Cardiac septum (tissue), 1 donor: ENCODE measurements at regions of chr3 and their contacts with region 1.

Region 1: GRCh38 chr3:196684548-196685407 is 27.3 kb downstream of the CEP19 start:
- DNase-seq: no peak

Region 2: GRCh38 chr3:196251918-196252317 is 432.9 kb before region 1 on chr3:
- intact Hi-C with region 1: loop called (anchors 10 kb)
- DNase-seq: no peak

Region 3: DNA sequence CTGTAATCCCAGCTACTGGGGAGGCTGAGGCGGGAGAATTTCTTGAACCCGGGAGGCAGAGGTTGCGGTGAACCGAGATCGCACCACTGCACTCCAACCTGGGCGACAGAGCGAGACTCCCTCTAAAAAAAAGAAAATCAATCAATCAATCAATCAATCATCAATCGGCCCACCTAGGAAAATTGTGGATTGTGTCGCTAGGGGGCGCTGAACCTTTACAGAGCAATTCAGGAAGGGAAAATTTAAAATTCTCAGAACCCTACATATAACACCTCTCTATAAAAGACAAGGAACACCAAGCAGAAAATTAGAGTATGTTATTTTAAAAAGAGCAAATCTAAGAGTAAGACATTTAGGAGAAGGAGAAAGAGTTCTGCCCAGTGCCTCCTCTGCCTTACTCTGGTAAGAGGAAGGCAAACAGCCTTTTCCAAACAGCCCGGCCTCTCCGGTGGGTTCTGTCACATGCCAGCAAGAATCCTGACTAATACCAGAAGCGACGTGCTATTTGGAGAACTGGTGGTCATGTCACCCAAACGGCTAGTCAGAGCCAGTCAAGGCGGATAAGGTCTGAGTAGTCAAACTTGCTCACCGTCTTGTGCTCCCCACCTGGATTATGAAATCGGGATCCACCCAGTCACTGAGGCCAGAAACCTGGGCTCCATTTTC is 147.3 kb before region 1 on chr3:
- intact Hi-C with region 1: loop called (anchors 5 kb)
- DNase-seq: no peak

Region 4: DNA sequence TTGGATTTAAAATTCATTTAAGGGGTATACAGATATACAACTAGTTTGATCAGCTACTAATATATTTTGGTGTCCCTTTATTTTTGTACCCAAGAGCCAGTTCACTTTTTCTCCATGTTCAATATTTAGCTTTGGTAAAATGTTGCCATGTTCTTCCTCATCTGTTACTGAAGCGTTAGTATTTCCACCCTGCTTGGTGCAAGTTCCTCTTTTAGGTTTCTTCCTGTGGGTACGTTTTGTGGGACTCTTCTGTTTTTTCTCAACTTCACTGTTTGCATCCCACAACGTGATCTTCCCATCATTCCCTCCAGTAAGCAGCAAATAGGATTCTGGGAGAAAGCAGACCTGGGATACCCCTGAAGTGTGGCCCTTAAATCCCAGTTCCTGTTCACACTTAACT is 130.6 kb before region 1 on chr3:
- intact Hi-C with region 1: no loop called
- DNase-seq: no peak